ENCODE measurements at regions of chr3 and their contacts with region 1.

Region 1: GRCh38 chr3:192816351-192816750 is 89.0 kb upstream of the FGF12 start:
- DNase-seq: no peak
- H3K4me3 Mint-ChIP-seq: no peak overlapping the region
- H3K27ac Mint-ChIP-seq: no peak overlapping the region
- H3K4me1 Mint-ChIP-seq: peaks cover 44% of the 10 kb centered on the region
- H3K27me3 Mint-ChIP-seq: peaks cover 7% of the 10 kb centered on the region

Region 2: DNA sequence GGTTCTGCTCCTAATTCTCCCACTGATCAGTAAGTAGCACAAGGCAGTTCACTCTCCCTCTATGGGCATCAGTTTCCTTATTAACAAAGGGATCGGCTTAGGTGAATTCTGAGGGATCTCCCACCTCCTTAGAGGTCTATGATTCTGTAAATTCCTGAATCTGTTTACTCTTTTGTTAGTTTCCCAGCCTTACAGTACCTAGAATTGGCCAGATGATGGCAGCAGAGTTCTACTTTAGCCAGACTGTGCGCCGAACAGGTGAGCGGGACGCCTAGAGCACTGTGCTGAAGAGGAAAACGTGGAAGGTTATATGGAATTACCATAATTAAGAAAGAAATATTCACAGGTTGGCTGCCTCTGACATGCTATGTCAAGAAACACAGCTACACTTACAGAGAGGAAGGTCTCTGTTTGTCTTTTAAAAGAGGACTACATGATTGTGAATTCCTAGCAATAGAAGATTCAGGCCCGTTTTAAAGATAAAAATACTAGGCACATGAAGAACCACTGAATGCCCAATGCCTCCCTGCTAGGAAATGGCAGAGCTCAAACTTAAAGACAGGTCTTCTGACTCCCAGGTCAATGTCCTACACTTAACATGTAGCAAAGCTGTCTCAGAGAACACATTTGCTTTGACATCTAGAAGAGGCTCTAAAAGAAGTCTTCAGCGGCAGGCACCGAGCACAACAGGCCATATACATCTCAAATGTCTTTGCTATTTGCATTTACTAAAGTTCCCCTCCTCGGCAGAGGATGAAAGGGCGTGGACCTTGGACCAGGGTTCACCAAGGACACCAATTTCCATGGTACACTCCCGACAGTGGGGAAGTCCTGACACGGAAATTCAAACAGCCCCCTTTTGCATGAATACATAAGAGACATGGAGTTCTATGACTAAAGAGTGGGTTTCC is 348.9 kb before region 1 on chr3:
- CTCF ChIA-PET with region 1: interaction called, 3 read pairs
- intact Hi-C with region 1: loop called (anchors 5 kb)
- DNase-seq: peak; percentile 68
- H3K4me3 Mint-ChIP-seq: no peak overlapping the region
- H3K27ac Mint-ChIP-seq: no peak overlapping the region
- H3K4me1 Mint-ChIP-seq: no peaks in the 10 kb centered on the region
- H3K27me3 Mint-ChIP-seq: peaks cover 16% of the 10 kb centered on the region

Region 3: GRCh38 chr3:192850451-192850981 is 34.2 kb after region 1 on chr3:
- CTCF ChIA-PET with region 1: interaction called, 5 read pairs
- intact Hi-C with region 1: loop called (anchors 1 kb)
- DNase-seq: peak; percentile 73
- H3K4me3 Mint-ChIP-seq: peak overlapping the region; percentile 22
- H3K27ac Mint-ChIP-seq: peak overlapping the region; percentile 84
- H3K4me1 Mint-ChIP-seq: peaks cover 47% of the 10 kb centered on the region
- H3K27me3 Mint-ChIP-seq: peaks cover 5% of the 10 kb centered on the region

Region 4: GRCh38 chr3:192899540-192899982 is 83.2 kb after region 1 on chr3:
- CTCF ChIA-PET with region 1: interaction called, 4 read pairs
- intact Hi-C with region 1: loop called (anchors 1 kb)
- DNase-seq: no peak
- H3K4me3 Mint-ChIP-seq: peak overlapping the region; percentile 22
- H3K27ac Mint-ChIP-seq: peak overlapping the region; percentile 82
- H3K4me1 Mint-ChIP-seq: peaks cover 47% of the 10 kb centered on the region
- H3K27me3 Mint-ChIP-seq: peaks cover 14% of the 10 kb centered on the region

Region 5: GRCh38 chr3:193040836-193041672 is 224.7 kb after region 1 on chr3:
- CTCF ChIA-PET with region 1: interaction called, 155 read pairs
- intact Hi-C with region 1: loop called (anchors 1 kb)
- DNase-seq: peak; percentile 9
- H3K4me3 Mint-ChIP-seq: no peak overlapping the region
- H3K27ac Mint-ChIP-seq: no peak overlapping the region
- H3K4me1 Mint-ChIP-seq: no peaks in the 10 kb centered on the region
- H3K27me3 Mint-ChIP-seq: no peaks in the 10 kb centered on the region

Region 6: DNA sequence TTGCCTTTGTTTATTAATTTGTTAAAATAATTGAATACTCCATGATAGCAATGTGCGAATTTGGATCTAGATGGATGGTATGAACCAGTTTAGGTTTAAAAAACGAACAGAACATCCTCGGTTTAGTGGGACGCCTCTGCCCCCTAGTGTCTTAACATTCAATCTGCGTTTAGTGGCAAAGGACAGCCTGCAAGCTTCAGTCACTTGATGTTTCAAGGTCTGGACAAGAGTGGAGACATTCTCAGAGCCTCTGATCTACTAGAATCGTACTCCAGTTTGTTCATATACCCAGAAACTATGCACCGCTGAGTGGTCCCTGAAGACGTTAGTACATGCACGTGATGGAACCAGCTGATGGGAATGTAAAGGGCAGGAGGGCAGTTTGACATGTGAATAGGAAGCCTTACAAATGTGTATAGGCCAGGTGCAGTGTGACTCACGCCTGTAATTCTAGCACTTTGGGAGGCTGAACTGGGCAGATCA is 756.1 kb after region 1 on chr3:
- CTCF ChIA-PET with region 1: interaction called, 16 read pairs
- intact Hi-C with region 1: loop called (anchors 1 kb)
- DNase-seq: peak; percentile 69
- H3K4me3 Mint-ChIP-seq: no peak overlapping the region
- H3K27ac Mint-ChIP-seq: no peak overlapping the region
- H3K4me1 Mint-ChIP-seq: no peaks in the 10 kb centered on the region
- H3K27me3 Mint-ChIP-seq: no peaks in the 10 kb centered on the region

Measured in activated naive CD4-positive, alpha-beta T cell treated with anti-CD3 and anti-CD28 coated beads for 36 hours (primary cell).